Endothelial cell of umbilical vein (primary cell): ENCODE measurements at regions of chr17 and their contacts with region 1.

Region 1: DNA sequence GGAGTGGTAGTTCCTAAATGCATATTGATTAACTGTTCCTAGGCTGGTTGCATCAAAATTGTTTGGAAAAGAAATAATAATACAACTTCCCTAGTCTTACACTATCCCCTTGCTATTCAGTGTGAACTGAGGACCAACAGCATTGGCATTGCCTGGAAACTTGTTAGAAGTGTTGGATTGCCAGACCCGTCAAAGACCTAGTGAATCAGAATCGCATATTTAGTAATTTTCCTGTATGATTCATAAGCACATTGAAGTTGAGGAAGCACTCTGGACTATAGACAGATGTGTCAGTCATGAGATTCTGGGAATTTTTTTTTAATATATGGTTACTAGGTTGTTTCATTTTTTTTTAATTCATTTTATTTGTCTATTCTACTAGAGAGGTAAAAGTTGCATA is 34.7 kb upstream of the KCNJ16 start:
- DNase-seq: peak; percentile 94
- H3K4me3 ChIP-seq: no peak overlapping the region
- H3K27ac ChIP-seq: peak overlapping the region; percentile 90
- H3K4me1 ChIP-seq: peaks cover 29% of the 10 kb centered on the region
- H3K27me3 ChIP-seq: no peaks in the 10 kb centered on the region
- CTCF ChIP-seq: no peak
- POLR2A ChIP-seq: no peak

Region 2: DNA sequence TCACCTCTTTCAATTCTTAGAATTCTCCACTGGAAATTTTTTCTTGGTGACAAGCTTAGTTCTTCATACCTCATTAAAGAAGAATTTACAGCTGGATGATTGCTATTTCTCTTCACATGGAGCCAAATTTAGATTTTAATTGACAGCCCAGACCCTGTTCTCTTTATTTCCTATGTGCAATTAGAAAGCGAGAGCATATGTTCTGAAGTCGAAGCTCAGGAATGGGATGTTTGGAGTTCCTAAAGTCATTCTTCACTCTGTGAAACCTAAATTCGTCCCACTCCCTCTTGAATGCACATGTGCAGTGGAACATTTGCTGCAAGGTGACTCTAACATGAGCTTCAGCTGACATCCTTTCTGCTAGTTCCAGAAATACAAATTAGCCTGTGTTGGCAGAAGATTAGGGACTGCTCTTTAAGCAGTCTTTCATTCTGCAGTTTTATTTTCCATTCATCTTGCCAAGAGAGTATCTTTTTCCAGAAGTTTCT is 94.6 kb before region 1 on chr17:
- CTCF ChIA-PET with region 1: no interaction called
- POLR2A ChIA-PET with region 1: no interaction called
- dilution Hi-C with region 1: no loop called
- intact Hi-C with region 1: loop called (anchors 5 kb)
- DNase-seq: no peak
- H3K4me3 ChIP-seq: no peak overlapping the region
- H3K27ac ChIP-seq: no peak overlapping the region
- H3K4me1 ChIP-seq: peaks cover 2% of the 10 kb centered on the region
- H3K27me3 ChIP-seq: no peaks in the 10 kb centered on the region
- CTCF ChIP-seq: no peak
- POLR2A ChIP-seq: no peak

Region 3: GRCh38 chr17:69997332-69997731 is 43.0 kb before region 1 on chr17:
- CTCF ChIA-PET with region 1: no interaction called
- POLR2A ChIA-PET with region 1: no interaction called
- dilution Hi-C with region 1: no loop called
- intact Hi-C with region 1: loop called (anchors 2 kb)
- DNase-seq: peak; percentile 44
- H3K4me3 ChIP-seq: no peak overlapping the region
- H3K27ac ChIP-seq: peak overlapping the region; percentile 28
- H3K4me1 ChIP-seq: peaks cover 14% of the 10 kb centered on the region
- H3K27me3 ChIP-seq: no peaks in the 10 kb centered on the region
- CTCF ChIP-seq: no peak
- POLR2A ChIP-seq: no peak

Region 4: GRCh38 chr17:70080541-70081347 is 40.4 kb after region 1 on chr17:
- CTCF ChIA-PET with region 1: no interaction called
- POLR2A ChIA-PET with region 1: no interaction called
- dilution Hi-C with region 1: no loop called
- intact Hi-C with region 1: no loop called
- DNase-seq: no peak
- H3K4me3 ChIP-seq: no peak overlapping the region
- H3K27ac ChIP-seq: no peak overlapping the region
- H3K4me1 ChIP-seq: no peaks in the 10 kb centered on the region
- H3K27me3 ChIP-seq: no peaks in the 10 kb centered on the region
- CTCF ChIP-seq: no peak
- POLR2A ChIP-seq: no peak

Region 5: GRCh38 chr17:70098030-70098429 is 57.7 kb after region 1 on chr17:
- CTCF ChIA-PET with region 1: no interaction called
- POLR2A ChIA-PET with region 1: no interaction called
- dilution Hi-C with region 1: no loop called
- intact Hi-C with region 1: no loop called
- DNase-seq: no peak
- H3K4me3 ChIP-seq: no peak overlapping the region
- H3K27ac ChIP-seq: no peak overlapping the region
- H3K4me1 ChIP-seq: peaks cover 11% of the 10 kb centered on the region
- H3K27me3 ChIP-seq: no peaks in the 10 kb centered on the region
- CTCF ChIP-seq: no peak
- POLR2A ChIP-seq: no peak

Region 6: DNA sequence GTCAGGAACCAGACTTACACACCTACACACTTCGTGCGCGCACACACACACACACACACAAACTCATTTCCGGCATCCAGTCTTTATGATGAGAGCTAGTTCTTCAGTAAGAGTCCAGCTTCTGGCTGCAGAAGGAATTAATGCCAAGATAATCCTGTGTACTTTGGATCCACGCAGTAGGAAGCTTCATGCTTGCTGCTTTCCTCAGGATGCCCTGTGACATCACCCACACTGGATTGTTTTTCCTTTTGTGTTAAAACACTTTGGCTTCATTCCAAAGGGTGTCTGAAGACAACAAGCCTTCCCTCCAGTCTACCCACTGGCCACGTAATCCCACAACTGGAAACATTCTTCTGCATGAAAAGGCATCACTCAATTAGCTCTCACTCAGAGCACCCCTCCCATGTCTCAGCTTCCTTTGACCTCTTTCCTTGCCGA is 70.1 kb after region 1 on chr17:
- CTCF ChIA-PET with region 1: interaction called, 4 read pairs
- POLR2A ChIA-PET with region 1: interaction called, 4 read pairs
- dilution Hi-C with region 1: no loop called
- intact Hi-C with region 1: loop called (anchors 2 kb)
- DNase-seq: peak; percentile 99
- H3K4me3 ChIP-seq: no peak overlapping the region
- H3K27ac ChIP-seq: peak overlapping the region; percentile 82
- H3K4me1 ChIP-seq: peaks cover 27% of the 10 kb centered on the region
- H3K27me3 ChIP-seq: no peaks in the 10 kb centered on the region
- CTCF ChIP-seq: no peak
- POLR2A ChIP-seq: peak; percentile 42

Region 7: DNA sequence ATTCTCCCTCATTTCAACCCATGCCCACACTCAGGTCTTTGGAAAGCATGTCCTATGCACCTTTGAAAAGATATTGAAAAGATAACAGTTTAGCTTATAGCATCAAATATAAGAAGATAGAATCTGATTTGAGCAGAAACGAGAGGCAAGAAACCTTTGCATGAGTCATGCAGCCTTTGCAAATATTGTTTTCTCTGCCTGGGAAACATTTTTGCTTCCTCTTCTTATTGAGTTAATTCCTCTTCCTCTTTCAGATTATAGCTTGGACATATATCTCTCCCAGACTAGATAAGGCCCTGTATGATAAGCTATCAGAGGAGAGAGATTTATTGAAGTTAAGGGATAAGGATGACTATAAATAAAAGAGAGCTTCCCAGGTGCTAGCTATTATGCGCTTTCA is 82.9 kb after region 1 on chr17:
- CTCF ChIA-PET with region 1: no interaction called
- POLR2A ChIA-PET with region 1: no interaction called
- dilution Hi-C with region 1: no loop called
- intact Hi-C with region 1: loop called (anchors 1 kb)
- DNase-seq: peak; percentile 56
- H3K4me3 ChIP-seq: no peak overlapping the region
- H3K27ac ChIP-seq: no peak overlapping the region
- H3K4me1 ChIP-seq: peaks cover 36% of the 10 kb centered on the region
- H3K27me3 ChIP-seq: no peaks in the 10 kb centered on the region
- CTCF ChIP-seq: no peak
- POLR2A ChIP-seq: no peak